CD4-positive, alpha-beta T cell (primary cell): ENCODE measurements at regions of chr9 and their contacts with region 1.

Region 1: GRCh38 chr9:115591584-115591984 is 473.6 kb upstream of the TNC start:
- DNase-seq: peak in 1 of 14 experiments; percentile 8
- ATAC-seq: no peak
- H3K4me3 ChIP-seq: no peak overlapping the region
- H3K4me3 Mint-ChIP-seq: no peak overlapping the region
- H3K27ac ChIP-seq: no peak overlapping the region
- H3K27ac Mint-ChIP-seq: no peak overlapping the region
- H3K4me1 ChIP-seq: no peaks in the 10 kb centered on the region
- H3K4me1 Mint-ChIP-seq: no peaks in the 10 kb centered on the region
- H3K27me3 ChIP-seq: peaks cover 2 to 12% of the 10 kb centered on the region in 2 experiments
- H3K27me3 Mint-ChIP-seq: peaks cover 35% of the 10 kb centered on the region
- CTCF ChIP-seq: no peak

Region 2: GRCh38 chr9:116661037-116661954 is 1069.7 kb after region 1 on chr9:
- CTCF ChIA-PET with region 1: no interaction called
- POLR2A ChIA-PET with region 1: no interaction called
- intact Hi-C with region 1: loop called (anchors 2 to 5 kb)
- DNase-seq: peak in 4 of 14 experiments; percentile 0 to 61 (median 45)
- ATAC-seq: no peak
- H3K4me3 ChIP-seq: no peak overlapping the region
- H3K4me3 Mint-ChIP-seq: no peak overlapping the region
- H3K27ac ChIP-seq: no peak overlapping the region
- H3K27ac Mint-ChIP-seq: no peak overlapping the region
- H3K4me1 ChIP-seq: no peaks in the 10 kb centered on the region
- H3K4me1 Mint-ChIP-seq: no peaks in the 10 kb centered on the region
- H3K27me3 ChIP-seq: no peaks in the 10 kb centered on the region
- H3K27me3 Mint-ChIP-seq: no peaks in the 10 kb centered on the region
- CTCF ChIP-seq: peak; percentile 59

Region 3: GRCh38 chr9:116860509-116861120 is 1269.0 kb after region 1 on chr9:
- CTCF ChIA-PET with region 1: no interaction called
- POLR2A ChIA-PET with region 1: no interaction called
- intact Hi-C with region 1: loop called (anchors 10 kb)
- DNase-seq: peak in 2 of 14 experiments; percentile 17 to 23
- ATAC-seq: no peak
- H3K4me3 ChIP-seq: no peak overlapping the region
- H3K4me3 Mint-ChIP-seq: no peak overlapping the region
- H3K27ac ChIP-seq: no peak overlapping the region
- H3K27ac Mint-ChIP-seq: no peak overlapping the region
- H3K4me1 ChIP-seq: no peaks in the 10 kb centered on the region
- H3K4me1 Mint-ChIP-seq: no peaks in the 10 kb centered on the region
- H3K27me3 ChIP-seq: no peaks in the 10 kb centered on the region
- H3K27me3 Mint-ChIP-seq: peaks cover 11% of the 10 kb centered on the region
- CTCF ChIP-seq: peak; percentile 52